Adrenal gland (tissue), 19 donors: ENCODE measurements at regions of chr6 and their contacts with region 1.

Region 1: GRCh38 chr6:34791701-34792235 is at the start of gene BLTP3A:
- DNase-seq: peak; percentile 52 to 74 (median 63)
- H3K4me3 ChIP-seq: peak within 1 kb of the TSS; percentile 46 to 88 (median 61)
- H3K27ac ChIP-seq: peak within 1 kb of the TSS; percentile 75 to 95 (median 92)
- H3K4me1 ChIP-seq: peaks cover 0 to 26% of the 10 kb centered on the region in 2 donors
- H3K27me3 ChIP-seq: no peaks in the 10 kb centered on the region
- CTCF ChIP-seq: peak in 2 of 6 experiments; percentile 12 to 16
- POLR2A ChIP-seq: peak; percentile 24 to 59
- total RNA-seq, gene BLTP3A: 7.5 to 21.4 (median 14.7) TPM

Region 2: GRCh38 chr6:34986845-34987246 is 195.1 kb after region 1 on chr6:
- intact Hi-C with region 1: loop called in 1 of 2 experiments (anchors 10 kb)
- DNase-seq: peak; percentile 64 to 87 (median 79)
- H3K4me3 ChIP-seq: no peak overlapping the region
- H3K27ac ChIP-seq: peak overlapping the region in 1 of 5 donors; percentile 32
- H3K4me1 ChIP-seq: peaks cover 5 to 10% of the 10 kb centered on the region in 2 donors
- H3K27me3 ChIP-seq: no peaks in the 10 kb centered on the region
- CTCF ChIP-seq: peak; percentile 80 to 92 (median 89)
- POLR2A ChIP-seq: no peak